K562 (cell line): ENCODE measurements at regions of chrX and their contacts with region 1.

Region 1: GRCh38 chrX:144253356-144253755 is 369.5 kb downstream of the UBE2NL start:
- DNase-seq: no peak
- ATAC-seq: no peak
- H3K4me3 ChIP-seq: no peak overlapping the region
- H3K27ac ChIP-seq: no peak overlapping the region
- H3K4me1 ChIP-seq: no peaks in the 10 kb centered on the region
- H3K27me3 ChIP-seq: no peaks in the 10 kb centered on the region
- CTCF ChIP-seq: no peak
- EP300 ChIP-seq: no peak
- POLR2A ChIP-seq: no peak
- RAD21 ChIP-seq: no peak

Region 2: DNA sequence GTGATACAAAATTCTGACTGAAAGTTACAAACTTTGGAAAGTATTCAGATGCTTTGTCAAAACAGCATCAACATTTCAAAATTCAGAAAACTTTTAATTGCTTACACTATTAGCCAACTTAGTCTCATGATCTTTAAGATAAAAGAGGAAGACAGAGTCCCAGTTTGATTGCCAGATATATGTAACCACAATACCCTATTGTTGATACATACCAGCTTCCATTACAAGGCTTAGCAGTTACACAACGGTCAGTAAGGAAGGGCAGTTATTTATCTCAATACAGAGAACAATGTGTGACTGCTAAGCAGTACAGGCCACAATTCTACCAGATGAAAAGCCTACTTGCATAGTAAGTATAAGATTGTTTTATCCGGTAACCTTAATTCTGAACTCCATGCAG is 874.5 kb before region 1 on chrX:
- CTCF ChIA-PET with region 1: no interaction called
- POLR2A ChIA-PET with region 1: no interaction called
- in situ Hi-C with region 1: loop called (anchors 10 kb)
- intact Hi-C with region 1: no loop called
- DNase-seq: no peak
- ATAC-seq: no peak
- H3K4me3 ChIP-seq: no peak overlapping the region
- H3K27ac ChIP-seq: no peak overlapping the region
- H3K4me1 ChIP-seq: no peaks in the 10 kb centered on the region
- H3K27me3 ChIP-seq: no peaks in the 10 kb centered on the region
- CTCF ChIP-seq: no peak
- EP300 ChIP-seq: no peak
- POLR2A ChIP-seq: no peak
- RAD21 ChIP-seq: no peak